BJ (cell line): ENCODE measurements at regions of chr15 and their contacts with region 1.

Region 1: GRCh38 chr15:34514251-34514670 is 69.2 kb downstream of the GOLGA8B start:
- DNase-seq: no peak
- H3K4me3 ChIP-seq: peak overlapping the region; percentile 59
- H3K27me3 ChIP-seq: peaks cover 10% of the 10 kb centered on the region
- CTCF ChIP-seq: 0 out of 2 replicates have a peak, but pooled peaks have one; percentile 15

Region 2: GRCh38 chr15:34587717-34588674 is 73.7 kb after region 1 on chr15:
- CTCF ChIA-PET with region 1: interaction called, 12 read pairs
- POLR2A ChIA-PET with region 1: no interaction called
- DNase-seq: peak; percentile 36
- H3K4me3 ChIP-seq: peak overlapping the region; percentile 27
- H3K27me3 ChIP-seq: no peaks in the 10 kb centered on the region
- CTCF ChIP-seq: peak; percentile 75

Region 3: GRCh38 chr15:34773917-34774316 is 259.7 kb after region 1 on chr15:
- CTCF ChIA-PET with region 1: no interaction called
- POLR2A ChIA-PET with region 1: no interaction called
- DNase-seq: no peak
- H3K4me3 ChIP-seq: no peak overlapping the region
- H3K27me3 ChIP-seq: peaks cover 3% of the 10 kb centered on the region; the same call in 1 of the 2 replicates
- CTCF ChIP-seq: no peak

Region 4: DNA sequence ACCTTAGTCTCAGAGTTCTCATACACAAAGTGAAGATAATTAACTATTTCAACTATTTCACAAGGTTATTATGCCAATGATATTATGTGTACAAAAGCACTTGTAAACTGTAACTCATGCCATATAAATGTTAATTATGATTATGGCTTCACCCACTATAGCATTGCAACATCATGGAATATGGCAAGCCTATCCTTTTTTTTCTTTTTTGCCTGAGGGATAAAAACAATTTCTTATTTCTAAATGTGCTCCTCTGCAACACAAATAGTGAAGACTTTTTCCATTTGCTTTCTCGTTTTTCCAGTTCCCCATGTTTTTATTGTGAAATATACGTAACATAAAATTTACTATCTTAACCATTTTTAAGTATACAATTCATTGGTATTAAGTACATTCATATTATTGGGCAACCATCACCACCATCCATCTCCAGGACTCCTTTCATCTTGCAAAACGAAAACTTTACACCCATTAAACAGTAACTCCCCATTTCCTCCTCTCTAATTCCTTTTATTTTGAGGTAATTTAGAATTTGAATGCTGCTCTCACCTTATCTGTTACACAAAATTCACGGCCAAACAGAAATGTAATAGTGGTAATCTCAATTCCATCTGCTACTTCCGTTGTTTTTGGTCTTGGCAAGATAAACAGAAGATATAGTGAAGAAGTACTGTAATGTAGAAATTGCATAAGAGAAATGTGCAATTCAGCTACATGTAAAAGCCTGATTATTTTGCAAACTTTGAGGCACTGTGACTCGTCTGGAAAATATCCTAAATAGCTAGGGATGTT is 524.6 kb after region 1 on chr15:
- CTCF ChIA-PET with region 1: no interaction called
- POLR2A ChIA-PET with region 1: no interaction called
- DNase-seq: peak; percentile 54
- H3K4me3 ChIP-seq: no peak overlapping the region
- H3K27me3 ChIP-seq: no peaks in the 10 kb centered on the region
- CTCF ChIP-seq: no peak